Mammary epithelial cell (primary cell): ENCODE measurements at regions of chr20 and their contacts with region 1.

Region 1: GRCh38 chr20:55160037-55160436 is 684.6 kb downstream of the DOK5 start:
- DNase-seq: peak; percentile 54
- H3K4me3 ChIP-seq: no peak overlapping the region
- H3K27ac ChIP-seq: peak overlapping the region; percentile 42
- H3K4me1 ChIP-seq: peaks cover 28% of the 10 kb centered on the region
- H3K27me3 ChIP-seq: no peaks in the 10 kb centered on the region
- CTCF ChIP-seq: no peak

Region 2: GRCh38 chr20:54740511-54741348 is 419.3 kb before region 1 on chr20:
- CTCF ChIA-PET with region 1: no interaction called
- dilution Hi-C with region 1: no loop called
- in situ Hi-C with region 1: no loop called
- intact Hi-C with region 1: no loop called
- DNase-seq: no peak
- H3K4me3 ChIP-seq: no peak overlapping the region
- H3K27ac ChIP-seq: no peak overlapping the region
- H3K4me1 ChIP-seq: no peaks in the 10 kb centered on the region
- H3K27me3 ChIP-seq: no peaks in the 10 kb centered on the region
- CTCF ChIP-seq: no peak

Region 3: DNA sequence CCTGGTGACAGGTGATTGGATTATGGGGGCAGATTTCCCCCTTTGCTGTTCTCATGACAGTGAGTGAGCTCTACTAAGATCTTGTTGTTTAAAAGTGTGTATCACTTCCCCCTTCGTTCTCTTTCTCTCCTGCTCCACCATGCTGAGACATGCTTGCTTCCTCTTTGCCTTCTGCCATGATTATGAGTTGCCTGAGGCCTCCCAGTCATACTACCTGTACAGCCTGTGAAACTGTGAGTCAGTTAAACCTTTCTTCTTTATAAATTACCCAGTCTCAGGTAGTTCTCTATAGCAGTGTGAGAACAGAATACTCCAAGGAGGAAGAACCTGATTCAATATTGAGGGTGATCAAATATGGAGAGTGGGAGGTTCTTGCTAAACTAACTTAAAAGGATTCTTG is 40.3 kb after region 1 on chr20:
- CTCF ChIA-PET with region 1: no interaction called
- dilution Hi-C with region 1: no loop called
- in situ Hi-C with region 1: no loop called
- intact Hi-C with region 1: loop called (anchors 5 kb)
- DNase-seq: peak; percentile 96
- H3K4me3 ChIP-seq: no peak overlapping the region
- H3K27ac ChIP-seq: peak overlapping the region; percentile 90
- H3K4me1 ChIP-seq: peaks cover 15% of the 10 kb centered on the region
- H3K27me3 ChIP-seq: no peaks in the 10 kb centered on the region
- CTCF ChIP-seq: no peak